HepG2 (cell line): ENCODE measurements at regions of chr17 and their contacts with region 1.

Region 1: DNA sequence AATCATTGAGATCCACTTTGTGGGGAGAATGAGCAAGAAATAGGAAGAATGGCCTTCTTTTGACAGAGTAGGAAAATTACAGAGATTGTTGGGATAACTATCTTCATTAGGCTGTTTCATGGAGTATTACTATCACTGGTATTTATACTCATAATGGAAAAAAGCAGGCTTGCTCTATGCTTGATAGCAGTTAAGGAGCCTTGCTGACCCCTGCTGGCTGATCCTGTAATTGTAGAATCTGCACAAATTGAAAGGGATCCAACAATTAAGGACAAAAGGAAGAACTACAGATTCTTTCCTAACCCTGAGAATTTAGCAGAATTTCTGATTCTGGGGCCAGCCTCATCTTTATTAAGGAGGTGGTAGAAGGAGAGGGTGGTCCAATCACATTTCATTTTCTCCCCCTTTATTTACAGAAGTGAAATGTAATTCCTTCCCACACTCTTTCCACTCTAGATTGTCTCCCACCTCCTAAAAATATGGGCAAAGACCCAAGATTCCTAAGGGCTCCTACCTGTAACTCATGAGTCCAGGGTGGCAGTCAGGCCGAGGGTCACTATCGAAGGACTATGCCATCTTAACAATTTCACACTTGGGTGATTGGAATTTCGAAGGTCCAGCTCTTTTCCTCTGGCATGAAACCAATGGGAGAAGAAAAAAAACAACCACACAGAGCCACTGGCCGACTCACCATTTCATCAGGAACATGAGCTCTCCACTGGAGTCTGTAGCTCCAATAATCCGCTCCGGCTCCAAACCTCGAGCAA is 26.3 kb downstream of the NFE2L1 start:
- DNase-seq: peak; percentile 75
- ATAC-seq: peak; percentile 86
- H3K4me3 ChIP-seq: no peak overlapping the region
- H3K27ac ChIP-seq: no peak overlapping the region
- H3K4me1 ChIP-seq: 0 out of 2 replicates have a peak, but pooled peaks cover 8% of the 10 kb centered on the region
- H3K27me3 ChIP-seq: no peaks in the 10 kb centered on the region
- CTCF ChIP-seq: peak; percentile 87
- EP300 ChIP-seq: no peak
- POLR2A ChIP-seq: no peak
- RAD21 ChIP-seq: peak; percentile 89

Region 2: GRCh38 chr17:48037036-48037837 is 37.3 kb before region 1 on chr17 and contains the start of gene COPZ2:
- CTCF ChIA-PET with region 1: interaction called, 19 read pairs
- POLR2A ChIA-PET with region 1: no interaction called
- in situ Hi-C with region 1: no loop called
- intact Hi-C with region 1: loop called (anchors 1 kb)
- DNase-seq: peak; percentile 50
- ATAC-seq: peak; percentile 89
- H3K4me3 ChIP-seq: peak within 1 kb of the TSS; percentile 74 to 86 (median 82)
- H3K27ac ChIP-seq: no peak within 1 kb of the TSS
- H3K4me1 ChIP-seq: peaks cover 27% of the 10 kb centered on the region
- H3K27me3 ChIP-seq: peaks cover 1 to 54% of the 10 kb centered on the region in 2 experiments; a peak in 4 of 5 replicates
- CTCF ChIP-seq: peak; percentile 85
- EP300 ChIP-seq: no peak
- POLR2A ChIP-seq: no peak
- RAD21 ChIP-seq: peak; percentile 75
- total RNA-seq, gene COPZ2: 0.74 and 1.5 TPM in 2 replicates

Region 3: DNA sequence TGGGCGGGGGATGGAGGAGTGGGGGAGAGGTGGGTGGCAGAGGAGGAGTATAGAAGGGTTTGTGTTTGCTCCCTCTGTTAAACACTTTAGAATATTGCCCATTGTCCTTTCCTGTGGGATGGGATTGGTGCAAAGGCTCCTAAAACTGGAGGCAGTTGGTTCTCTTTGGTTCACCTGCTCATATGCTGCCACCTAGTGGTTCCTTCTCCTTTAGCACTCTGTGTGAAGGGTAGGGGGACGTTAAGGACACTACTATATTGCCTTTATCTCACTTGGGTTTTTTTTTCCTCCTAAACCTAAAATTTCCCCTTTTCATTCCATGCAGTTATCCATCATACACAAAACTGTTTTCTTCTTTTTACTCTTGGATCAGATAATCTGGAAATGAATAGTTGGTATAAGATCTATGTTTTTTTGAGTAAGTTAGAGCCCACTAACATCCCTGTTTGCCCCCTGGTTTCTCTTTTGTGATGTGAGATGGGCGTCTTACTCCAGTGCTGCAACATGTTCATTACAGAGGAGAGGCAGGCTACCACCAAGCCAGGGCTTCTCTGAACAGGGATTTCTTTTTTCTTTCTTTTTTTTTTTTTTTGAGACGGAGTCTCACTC is 56.8 kb after region 1 on chr17:
- CTCF ChIA-PET with region 1: interaction called, 31 read pairs
- POLR2A ChIA-PET with region 1: no interaction called
- in situ Hi-C with region 1: no loop called
- intact Hi-C with region 1: no loop called
- DNase-seq: peak; percentile 74
- ATAC-seq: peak; percentile 91
- H3K4me3 ChIP-seq: no peak overlapping the region
- H3K27ac ChIP-seq: no peak overlapping the region
- H3K4me1 ChIP-seq: no peaks in the 10 kb centered on the region
- H3K27me3 ChIP-seq: peaks cover 0 to 6% of the 10 kb centered on the region in 2 experiments; a peak in 1 of 5 replicates
- CTCF ChIP-seq: peak; percentile 91
- EP300 ChIP-seq: no peak
- POLR2A ChIP-seq: no peak
- RAD21 ChIP-seq: peak; percentile 75